ENCODE measurements at regions of chr4 and their contacts with region 1.

Region 1: GRCh38 chr4:18980516-18981233 is 959.1 kb upstream of the LCORL start:
- DNase-seq: peak; percentile 98
- H3K4me3 ChIP-seq: peak overlapping the region; percentile 44
- H3K27ac ChIP-seq: peak overlapping the region; percentile 98
- H3K4me1 ChIP-seq: peaks cover 35% of the 10 kb centered on the region
- CTCF ChIP-seq: no peak

Region 2: DNA sequence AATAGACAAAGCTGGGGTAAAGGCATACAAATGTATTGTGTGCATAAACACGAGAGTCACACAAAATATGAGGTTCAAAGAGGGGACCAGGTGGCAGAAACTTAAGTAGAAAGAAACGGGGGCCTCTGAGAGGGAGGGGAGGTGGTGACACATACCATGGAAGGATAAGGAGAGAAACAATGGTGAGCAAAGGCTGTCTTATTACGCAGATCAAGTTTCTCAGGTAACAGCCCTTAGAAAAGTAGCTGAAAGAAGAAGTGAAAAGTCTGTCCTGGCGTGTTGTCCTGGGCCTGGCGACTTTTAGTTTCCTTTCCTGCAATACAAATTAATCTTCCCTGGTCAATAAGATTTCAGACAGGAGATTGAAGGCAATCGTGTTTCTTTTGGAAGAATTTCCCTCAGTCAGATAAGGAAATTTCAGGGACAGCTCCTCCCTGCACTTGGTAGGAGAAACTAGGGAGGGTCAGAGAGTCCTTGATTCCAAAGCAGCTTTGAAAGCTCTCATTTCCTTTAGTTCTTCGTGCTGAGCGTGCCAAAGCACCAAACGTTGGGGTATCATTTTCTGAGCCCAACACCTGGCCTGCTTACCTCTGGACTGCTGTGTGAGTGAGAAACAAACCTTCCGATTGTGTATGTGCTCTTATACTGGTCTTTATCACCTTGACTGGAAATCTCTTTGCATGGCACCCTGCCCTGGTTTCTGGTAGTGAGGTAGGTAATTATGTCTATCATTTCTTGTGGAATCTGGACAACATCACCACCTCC is 282.4 kb before region 1 on chr4:
- CTCF ChIA-PET with region 1: no interaction called
- POLR2A ChIA-PET with region 1: no interaction called
- intact Hi-C with region 1: loop called (anchors 2 kb)
- DNase-seq: peak; percentile 34
- H3K4me3 ChIP-seq: no peak overlapping the region
- H3K27ac ChIP-seq: peak overlapping the region; percentile 21
- H3K4me1 ChIP-seq: peaks cover 19% of the 10 kb centered on the region
- CTCF ChIP-seq: no peak

Region 3: GRCh38 chr4:18934197-18934596 is 46.5 kb before region 1 on chr4:
- CTCF ChIA-PET with region 1: no interaction called
- POLR2A ChIA-PET with region 1: interaction called, 7 read pairs
- intact Hi-C with region 1: loop called (anchors 2 kb)
- DNase-seq: peak; percentile 27
- H3K4me3 ChIP-seq: no peak overlapping the region
- H3K27ac ChIP-seq: no peak overlapping the region
- H3K4me1 ChIP-seq: peaks cover 24% of the 10 kb centered on the region
- CTCF ChIP-seq: peak; percentile 65